ENCODE measurements at regions of chr17 and their contacts with region 1.

Region 1: DNA sequence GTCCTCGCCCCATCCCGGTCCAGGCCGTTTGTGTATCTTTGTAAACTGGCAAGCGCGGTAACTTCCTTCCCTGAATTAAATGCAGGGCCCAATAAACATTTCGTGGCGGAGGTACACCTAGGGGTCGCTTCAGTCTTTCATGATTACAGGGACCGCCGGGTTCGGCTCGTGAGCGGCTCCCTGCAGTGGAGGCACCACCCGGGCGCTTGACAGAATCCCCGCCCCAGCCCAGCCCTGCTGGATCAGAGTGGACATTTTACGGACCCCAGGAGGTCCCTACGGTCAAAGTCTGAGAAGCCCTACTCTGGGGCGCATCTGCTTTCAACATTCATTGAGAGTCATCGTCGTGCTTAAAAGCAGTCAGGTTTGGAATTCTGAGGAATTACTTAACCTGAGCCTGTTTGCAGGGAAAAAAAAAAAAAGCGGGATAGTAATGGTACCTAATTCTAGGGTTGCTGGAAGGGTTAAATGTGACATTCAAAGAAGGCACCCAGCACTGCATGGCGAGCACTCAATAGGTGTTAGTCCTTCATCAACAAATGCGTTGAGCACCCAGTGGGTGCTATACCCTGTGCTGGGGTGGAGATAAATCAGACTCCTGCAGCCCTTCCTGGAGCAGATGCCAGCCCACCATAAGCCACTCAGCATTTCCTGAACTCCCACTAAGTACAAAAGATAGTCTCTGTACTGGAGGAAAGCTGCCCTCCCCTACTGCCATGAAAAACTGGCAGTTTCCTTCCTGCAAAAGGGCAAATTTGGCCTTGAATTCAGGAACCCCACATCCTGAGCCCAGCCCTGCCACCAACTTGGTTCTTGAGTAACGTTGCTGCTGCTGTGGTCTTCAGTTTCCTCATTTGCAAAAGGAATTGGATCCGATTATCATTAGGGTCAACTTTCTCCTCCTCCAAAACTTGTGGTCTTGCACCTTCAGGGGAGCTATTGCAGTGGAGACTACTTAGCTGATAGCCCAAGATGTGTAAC is 658 bp upstream of the DUSP3 start:
- DNase-seq: no peak
- H3K4me3 ChIP-seq: peak overlapping the region; percentile 44 to 99 (median 88)
- H3K27ac ChIP-seq: peak overlapping the region; percentile 96 to 100 (median 100)
- H3K4me1 ChIP-seq: peaks cover 11 to 23% (median 19%) of the 10 kb centered on the region in 4 donors
- H3K27me3 ChIP-seq: peaks cover 19% of the 10 kb centered on the region
- CTCF ChIP-seq: peak in 2 of 5 experiments; percentile 3 to 12
- EP300 ChIP-seq: no peak
- POLR2A ChIP-seq: no peak

Region 2: DNA sequence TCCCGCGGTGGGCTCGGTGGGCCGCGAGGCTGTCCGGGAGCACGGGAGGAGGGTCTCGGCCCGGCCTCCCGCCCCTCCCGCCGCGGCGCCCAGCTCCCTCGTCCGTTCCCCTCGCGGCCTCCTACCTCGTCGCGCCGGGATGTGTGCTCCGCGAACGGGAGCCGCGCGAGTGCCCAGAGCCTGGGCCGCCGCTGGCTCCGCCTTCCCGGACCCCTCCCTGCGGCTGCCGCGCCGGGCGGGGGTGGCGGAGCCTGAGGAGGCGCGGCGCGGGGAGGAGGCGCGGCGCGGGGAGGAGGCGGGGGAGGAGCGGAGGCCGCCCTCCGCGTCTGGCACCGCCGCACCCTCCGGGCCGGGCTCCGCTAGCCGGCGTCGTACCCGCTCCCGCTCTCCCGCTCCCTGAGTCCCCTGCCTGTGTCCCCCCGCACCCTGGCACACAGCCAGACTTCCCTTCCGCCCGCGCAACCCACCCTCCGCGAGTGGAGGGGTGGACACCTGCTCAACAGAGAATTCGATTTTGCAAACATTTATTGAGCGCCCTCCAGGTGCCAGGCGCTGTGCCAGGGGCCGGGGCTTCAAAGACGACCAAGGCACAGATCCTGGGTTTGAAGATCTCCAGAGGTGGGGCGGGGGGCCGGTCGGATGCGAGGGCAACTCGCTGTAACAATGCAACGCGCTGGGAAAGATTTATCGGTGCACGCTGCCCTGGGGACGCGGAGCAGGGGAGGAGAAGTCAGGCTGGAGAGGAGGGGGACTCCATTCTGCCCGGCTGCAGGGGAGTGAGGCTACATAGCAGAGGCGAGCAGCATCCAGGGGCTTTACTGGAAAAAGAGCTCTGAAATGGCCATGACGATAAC is 53.8 kb after region 1 on chr17 and contains the start of gene MPP3:
- in situ Hi-C with region 1: no loop called
- intact Hi-C with region 1: loop called (anchors 10 kb)
- DNase-seq: peak; percentile 80
- H3K4me3 ChIP-seq: peak within 1 kb of the TSS; percentile 45 to 80 (median 68)
- H3K27ac ChIP-seq: peak within 1 kb of the TSS; percentile 23 to 77 (median 64)
- H3K4me1 ChIP-seq: peaks cover 5 to 17% (median 11%) of the 10 kb centered on the region in 4 donors
- H3K27me3 ChIP-seq: peaks cover 4% of the 10 kb centered on the region
- CTCF ChIP-seq: no peak
- EP300 ChIP-seq: no peak
- POLR2A ChIP-seq: peak; percentile 19
- total RNA-seq, gene MPP3: 6.8 to 10.7 (median 7.5) TPM

Measured in transverse colon (tissue), 4 donors.